ENCODE measurements at regions of chr5 and their contacts with region 1.

Region 1: GRCh38 chr5:129904102-129904666 is at the start of gene CHSY3:
- DNase-seq: peak; percentile 11
- H3K4me3 ChIP-seq: peak within 1 kb of the TSS; percentile 68
- H3K27ac ChIP-seq: no peak within 1 kb of the TSS
- H3K27me3 ChIP-seq: peaks cover 7% of the 10 kb centered on the region
- CTCF ChIP-seq: no peak
- polyA plus RNA-seq, gene CHSY3: 0.43 and 0.67 TPM in 2 replicates

Region 2: DNA sequence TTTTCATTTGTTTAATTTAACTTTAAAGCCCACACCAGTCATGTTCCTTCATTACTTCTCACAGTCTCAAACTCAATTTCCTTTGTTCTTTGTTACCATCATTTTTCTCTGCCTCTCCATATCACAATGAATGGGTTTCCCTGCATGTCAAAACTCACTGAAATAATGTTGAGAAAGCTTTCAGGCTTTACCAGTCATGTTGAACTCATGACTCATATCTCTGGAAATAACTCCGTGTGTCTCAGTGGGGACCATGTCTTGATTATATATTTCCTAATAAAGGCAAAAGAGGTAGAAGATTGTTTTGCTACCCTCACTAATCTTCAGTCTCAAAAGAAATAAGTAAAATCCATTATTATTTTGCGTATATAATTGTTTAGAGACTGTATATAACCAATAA is 231.3 kb after region 1 on chr5:
- CTCF ChIA-PET with region 1: interaction called, 58 read pairs
- POLR2A ChIA-PET with region 1: no interaction called
- DNase-seq: no peak
- H3K4me3 ChIP-seq: no peak overlapping the region
- H3K27ac ChIP-seq: no peak overlapping the region
- H3K27me3 ChIP-seq: no peaks in the 10 kb centered on the region
- CTCF ChIP-seq: no peak

Region 3: DNA sequence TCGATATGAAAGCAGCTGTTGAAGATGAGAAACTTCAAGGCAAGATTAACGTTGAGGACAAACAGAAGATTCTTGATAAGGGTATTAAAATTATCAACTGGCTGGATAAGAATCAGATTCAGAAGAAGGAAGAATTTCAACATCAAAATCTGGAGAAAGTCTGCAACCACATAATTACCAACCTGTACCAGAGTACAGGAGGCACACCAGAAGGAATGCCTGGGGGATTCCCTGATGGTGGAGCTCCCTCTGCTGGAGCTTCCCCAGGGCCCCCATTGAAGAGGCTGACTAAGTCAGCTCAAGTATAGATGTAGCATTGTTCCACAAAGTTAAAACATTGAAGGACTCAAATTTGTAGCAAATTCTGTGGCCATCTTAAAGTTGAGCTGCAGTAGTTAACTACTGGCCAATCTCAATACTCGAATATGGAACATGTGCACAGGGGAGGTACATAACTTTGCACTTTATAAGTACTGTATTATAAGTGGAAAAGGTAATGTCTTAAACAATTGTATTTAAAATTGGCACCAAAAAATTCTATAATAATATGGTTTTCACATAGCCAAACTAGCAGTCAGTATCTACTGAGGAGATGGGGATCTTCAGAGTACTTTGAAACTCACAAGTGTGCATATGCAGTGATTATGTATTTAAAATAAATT is 237.6 kb after region 1 on chr5:
- CTCF ChIA-PET with region 1: interaction called, 58 read pairs
- POLR2A ChIA-PET with region 1: no interaction called
- DNase-seq: peak; percentile 10
- H3K4me3 ChIP-seq: no peak overlapping the region
- H3K27ac ChIP-seq: no peak overlapping the region
- H3K27me3 ChIP-seq: no peaks in the 10 kb centered on the region
- CTCF ChIP-seq: peak; percentile 88

Region 4: DNA sequence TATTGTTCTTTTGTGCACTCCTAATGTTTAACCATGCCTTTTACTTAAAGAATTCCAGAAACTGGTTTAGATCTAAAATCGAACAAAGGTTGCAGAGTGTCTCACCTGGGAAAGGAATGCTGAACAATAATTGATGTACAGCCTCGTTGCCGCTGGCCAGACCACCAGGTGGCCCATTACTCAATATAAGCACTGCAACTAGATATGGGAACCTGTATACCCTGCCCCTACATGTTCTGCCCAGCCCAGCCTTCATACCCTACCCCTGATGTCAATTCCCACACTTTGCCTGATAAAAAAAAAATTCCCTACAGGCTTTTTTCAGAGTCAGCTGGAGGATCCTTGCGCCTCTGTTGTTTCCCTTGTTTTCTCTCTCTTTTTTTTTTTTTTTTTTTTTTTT is 1247.0 kb after region 1 on chr5:
- CTCF ChIA-PET with region 1: no interaction called
- POLR2A ChIA-PET with region 1: interaction called, 10 read pairs
- DNase-seq: no peak
- H3K4me3 ChIP-seq: no peak overlapping the region
- H3K27ac ChIP-seq: no peak overlapping the region
- H3K27me3 ChIP-seq: no peaks in the 10 kb centered on the region
- CTCF ChIP-seq: no peak